GM12878 (cell line): ENCODE measurements at regions of chr20 and their contacts with region 1.

Region 1: GRCh38 chr20:43749734-43750294 is 23.0 kb upstream of the GTSF1L start:
- DNase-seq: peak; percentile 13
- ATAC-seq: peak; percentile 45
- H3K4me3 ChIP-seq: no peak overlapping the region
- H3K27ac ChIP-seq: peak overlapping the region; percentile 84
- H3K4me1 ChIP-seq: peaks cover 34% of the 10 kb centered on the region
- H3K27me3 ChIP-seq: no peaks in the 10 kb centered on the region
- CTCF ChIP-seq: peak; percentile 96 to 99 (median 98); a peak in 5 of 6 replicates
- EP300 ChIP-seq: no peak
- POLR2A ChIP-seq: no peak
- RAD21 ChIP-seq: peak; percentile 95

Region 2: GRCh38 chr20:43537921-43538877 is 211.6 kb before region 1 on chr20:
- CTCF ChIA-PET with region 1: interaction called, 18 read pairs
- POLR2A ChIA-PET with region 1: no interaction called
- RAD21 ChIA-PET with region 1: interaction called, 6 read pairs
- SMC1A ChIA-PET with region 1: interaction called, 7 read pairs
- in situ Hi-C with region 1: no loop called
- intact Hi-C with region 1: no loop called
- DNase-seq: no peak
- ATAC-seq: peak; percentile 85
- H3K4me3 ChIP-seq: no peak overlapping the region
- H3K27ac ChIP-seq: no peak overlapping the region
- H3K4me1 ChIP-seq: no peaks in the 10 kb centered on the region
- H3K27me3 ChIP-seq: no peaks in the 10 kb centered on the region; a peak in 2 of 4 replicates
- CTCF ChIP-seq: peak; percentile 83 to 92 (median 90)
- EP300 ChIP-seq: no peak
- POLR2A ChIP-seq: no peak
- RAD21 ChIP-seq: peak; percentile 82

Region 3: GRCh38 chr20:43787937-43788336 is 38.1 kb after region 1 on chr20:
- CTCF ChIA-PET with region 1: interaction called, 4 read pairs
- POLR2A ChIA-PET with region 1: no interaction called
- RAD21 ChIA-PET with region 1: interaction called, 7 read pairs
- SMC1A ChIA-PET with region 1: interaction called, 7 read pairs
- in situ Hi-C with region 1: no loop called
- intact Hi-C with region 1: loop called (anchors 1 kb)
- DNase-seq: no peak
- ATAC-seq: peak; percentile 85
- H3K4me3 ChIP-seq: no peak overlapping the region
- H3K27ac ChIP-seq: no peak overlapping the region
- H3K4me1 ChIP-seq: peaks cover 8% of the 10 kb centered on the region
- H3K27me3 ChIP-seq: no peaks in the 10 kb centered on the region
- CTCF ChIP-seq: no peak
- EP300 ChIP-seq: no peak
- POLR2A ChIP-seq: no peak
- RAD21 ChIP-seq: no peak

Region 4: DNA sequence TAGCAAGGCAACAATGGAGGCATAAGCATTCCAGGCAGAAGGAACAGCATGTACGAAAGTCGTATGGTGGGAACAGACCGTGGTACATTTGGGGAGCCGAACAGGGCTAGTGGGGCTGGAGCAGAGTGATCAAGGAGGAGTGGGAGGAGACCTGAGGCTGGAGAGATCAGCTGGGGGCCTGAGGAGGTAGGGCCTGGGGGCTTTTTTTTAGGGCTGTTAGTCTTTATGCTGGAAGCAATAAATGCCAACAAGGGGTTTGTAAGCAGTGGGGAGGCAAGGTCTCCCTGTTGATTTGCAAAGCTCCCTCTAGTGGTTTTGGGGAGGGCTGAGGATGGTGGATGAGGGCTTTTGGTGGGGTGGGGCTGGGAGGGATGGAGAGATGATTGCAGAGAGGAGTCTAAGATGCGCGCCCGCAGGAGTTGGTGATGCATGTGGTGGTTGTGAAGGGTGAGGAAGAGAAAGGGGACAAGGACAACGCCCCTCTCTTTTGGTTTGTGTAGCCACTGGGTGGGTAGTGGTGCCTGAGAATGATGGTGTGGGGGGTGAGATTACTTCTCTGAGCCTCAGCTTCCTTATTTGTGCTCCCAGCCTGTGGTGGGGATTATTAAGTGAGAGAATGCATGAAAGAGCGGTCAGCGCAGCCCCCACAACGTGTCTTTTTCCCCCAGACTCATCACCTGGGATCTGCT is 90.7 kb after region 1 on chr20:
- CTCF ChIA-PET with region 1: interaction called, 129 read pairs
- POLR2A ChIA-PET with region 1: interaction called, 6 read pairs
- RAD21 ChIA-PET with region 1: interaction called, 98 read pairs
- SMC1A ChIA-PET with region 1: interaction called, 72 read pairs
- in situ Hi-C with region 1: no loop called
- intact Hi-C with region 1: loop called (anchors 1 kb)
- DNase-seq: no peak
- ATAC-seq: peak; percentile 78
- H3K4me3 ChIP-seq: no peak overlapping the region
- H3K27ac ChIP-seq: peak overlapping the region; percentile 23; the same call in 1 of the 2 replicates
- H3K4me1 ChIP-seq: peaks cover 37% of the 10 kb centered on the region
- H3K27me3 ChIP-seq: no peaks in the 10 kb centered on the region
- CTCF ChIP-seq: peak; percentile 35 to 70 (median 51)
- EP300 ChIP-seq: no peak
- POLR2A ChIP-seq: no peak
- RAD21 ChIP-seq: peak; percentile 70

Region 5: GRCh38 chr20:43949741-43950618 is 200.2 kb after region 1 on chr20:
- CTCF ChIA-PET with region 1: interaction called, 37 read pairs
- POLR2A ChIA-PET with region 1: interaction called, 21 read pairs
- RAD21 ChIA-PET with region 1: interaction called, 24 read pairs
- SMC1A ChIA-PET with region 1: interaction called, 25 read pairs
- in situ Hi-C with region 1: no loop called
- intact Hi-C with region 1: loop called (anchors 2 kb)
- DNase-seq: peak; percentile 66
- ATAC-seq: peak; percentile 92
- H3K4me3 ChIP-seq: no peak overlapping the region
- H3K27ac ChIP-seq: peak overlapping the region; percentile 45
- H3K4me1 ChIP-seq: peaks cover 35% of the 10 kb centered on the region
- H3K27me3 ChIP-seq: no peaks in the 10 kb centered on the region
- CTCF ChIP-seq: no peak
- EP300 ChIP-seq: peak; percentile 28 to 41; a peak in 2 of 4 replicates
- POLR2A ChIP-seq: peak; percentile 53
- RAD21 ChIP-seq: no peak

Region 6: GRCh38 chr20:44018259-44018941 is 268.6 kb after region 1 on chr20:
- CTCF ChIA-PET with region 1: interaction called, 10 read pairs
- POLR2A ChIA-PET with region 1: no interaction called
- RAD21 ChIA-PET with region 1: no interaction called
- SMC1A ChIA-PET with region 1: interaction called, 5 read pairs
- in situ Hi-C with region 1: no loop called
- intact Hi-C with region 1: no loop called
- DNase-seq: no peak
- ATAC-seq: no peak
- H3K4me3 ChIP-seq: no peak overlapping the region
- H3K27ac ChIP-seq: no peak overlapping the region
- H3K4me1 ChIP-seq: peaks cover 5% of the 10 kb centered on the region; the same call in 1 of the 2 replicates
- H3K27me3 ChIP-seq: no peaks in the 10 kb centered on the region
- CTCF ChIP-seq: no peak
- EP300 ChIP-seq: no peak
- POLR2A ChIP-seq: no peak
- RAD21 ChIP-seq: no peak

Region 7: DNA sequence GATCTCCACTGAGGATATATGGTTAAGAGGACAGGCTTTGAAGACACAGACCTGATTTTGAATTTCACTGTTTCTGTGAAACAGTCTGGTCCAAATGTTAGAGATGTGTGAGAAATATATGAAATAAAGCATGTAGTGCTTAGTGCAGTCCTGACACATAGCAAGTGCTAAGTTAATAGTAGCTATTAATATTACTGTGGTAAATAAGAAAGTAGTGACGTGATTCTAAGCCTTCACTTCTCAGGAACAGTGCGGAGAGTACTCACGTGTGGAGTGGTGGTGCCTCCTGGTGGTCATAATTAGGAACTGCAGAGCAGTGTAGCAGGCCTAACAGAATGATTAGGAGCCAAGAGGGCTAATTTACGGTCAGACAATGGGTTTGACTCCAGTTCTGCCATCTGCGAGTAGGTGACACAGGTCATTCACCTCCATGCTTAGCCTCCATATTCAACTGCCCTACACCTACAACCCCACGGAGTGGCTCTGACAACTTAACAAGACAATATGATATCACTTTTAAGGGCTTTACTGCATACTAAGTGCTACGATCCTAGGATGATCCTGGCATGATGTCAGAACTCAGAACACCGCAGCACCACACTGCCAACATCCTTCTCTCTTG is 330.9 kb after region 1 on chr20:
- CTCF ChIA-PET with region 1: interaction called, 223 read pairs
- POLR2A ChIA-PET with region 1: interaction called, 15 read pairs
- RAD21 ChIA-PET with region 1: interaction called, 182 read pairs
- SMC1A ChIA-PET with region 1: interaction called, 164 read pairs
- in situ Hi-C with region 1: loop called (anchors 5 kb)
- intact Hi-C with region 1: loop called (anchors 1 kb)
- DNase-seq: peak; percentile 55
- ATAC-seq: peak; percentile 93
- H3K4me3 ChIP-seq: no peak overlapping the region
- H3K27ac ChIP-seq: no peak overlapping the region
- H3K4me1 ChIP-seq: 0 out of 2 replicates have a peak, but pooled peaks cover 4% of the 10 kb centered on the region
- H3K27me3 ChIP-seq: no peaks in the 10 kb centered on the region
- CTCF ChIP-seq: peak; percentile 93 to 99 (median 99); a peak in 5 of 6 replicates
- EP300 ChIP-seq: no peak
- POLR2A ChIP-seq: no peak
- RAD21 ChIP-seq: peak; percentile 100